ENCODE measurements at regions of chr11 and their contacts with region 1.

Region 1: DNA sequence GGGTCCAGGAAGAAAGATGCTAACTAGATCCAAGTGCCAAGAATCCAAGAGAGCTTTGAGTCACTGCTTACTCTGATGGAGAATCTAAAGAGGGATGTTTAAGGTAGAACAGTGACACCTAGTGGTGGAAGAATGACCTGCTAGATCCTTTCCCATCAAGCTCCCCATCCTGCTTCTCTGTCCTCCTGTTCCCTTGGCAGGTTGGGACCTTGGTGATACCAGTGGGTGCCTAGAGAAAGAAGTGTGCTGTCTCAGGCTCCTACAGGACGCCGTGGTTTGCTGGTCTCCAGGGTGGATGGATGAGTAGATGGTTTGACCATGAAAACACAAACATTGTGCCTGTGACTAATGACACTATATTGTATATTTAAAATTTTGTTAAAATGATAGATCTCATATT is 383.7 kb downstream of the TMEM135 start:
- DNase-seq: peak; percentile 32
- ATAC-seq: peak; percentile 94
- H3K4me3 Mint-ChIP-seq: no peak overlapping the region
- H3K27ac Mint-ChIP-seq: no peak overlapping the region
- H3K4me1 Mint-ChIP-seq: peaks cover 11% of the 10 kb centered on the region
- H3K27me3 Mint-ChIP-seq: no peaks in the 10 kb centered on the region
- CTCF ChIP-seq: peak; percentile 59

Region 2: DNA sequence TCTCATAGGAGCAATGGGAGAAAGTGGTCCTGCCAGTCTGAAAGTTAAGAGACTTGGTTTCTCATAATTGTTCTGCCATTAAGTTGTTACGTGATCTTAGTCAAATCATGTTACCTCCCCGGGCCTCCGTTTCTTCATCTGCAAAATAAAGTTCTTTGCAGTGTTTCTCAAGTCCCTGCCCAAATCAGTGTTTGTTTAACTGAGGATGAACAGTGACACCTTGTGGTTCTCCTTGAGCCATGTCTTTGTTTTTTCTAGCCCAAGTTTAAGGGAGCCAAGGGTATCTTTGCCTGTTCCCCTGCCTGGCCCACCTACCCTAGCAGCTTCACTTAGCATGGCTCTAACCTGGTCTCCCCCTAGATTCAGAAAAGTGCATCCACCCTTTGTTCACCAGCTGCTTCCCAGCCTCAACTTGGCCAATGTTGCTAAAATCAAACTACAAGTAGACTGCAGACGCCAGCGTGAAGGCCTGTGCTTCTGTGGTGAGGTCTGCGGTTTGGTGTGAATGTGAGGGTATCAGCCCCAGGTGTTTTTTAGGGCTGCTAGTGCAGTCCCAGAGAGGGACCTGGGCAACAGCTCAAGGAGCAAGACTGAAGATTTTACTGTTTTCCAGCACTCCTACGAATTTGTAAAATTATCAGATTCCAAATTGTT is 501.7 kb before region 1 on chr11:
- CTCF ChIA-PET with region 1: interaction called, 11 read pairs
- POLR2A ChIA-PET with region 1: no interaction called
- DNase-seq: peak; percentile 15
- ATAC-seq: peak; percentile 66
- H3K4me3 Mint-ChIP-seq: no peak overlapping the region
- H3K27ac Mint-ChIP-seq: peak overlapping the region; percentile 29; the same call in 1 of the 2 replicates
- H3K4me1 Mint-ChIP-seq: peaks cover 29% of the 10 kb centered on the region
- H3K27me3 Mint-ChIP-seq: no peaks in the 10 kb centered on the region; the same call in 1 of the 2 replicates
- CTCF ChIP-seq: peak; percentile 52

Region 3: GRCh38 chr11:86938900-86939880 is 482.2 kb before region 1 on chr11:
- CTCF ChIA-PET with region 1: interaction called, 29 read pairs
- POLR2A ChIA-PET with region 1: no interaction called
- DNase-seq: no peak
- ATAC-seq: peak; percentile 49
- H3K4me3 Mint-ChIP-seq: no peak overlapping the region
- H3K27ac Mint-ChIP-seq: peak overlapping the region; percentile 86; the same call in 1 of the 2 replicates
- H3K4me1 Mint-ChIP-seq: peaks cover 40% of the 10 kb centered on the region
- H3K27me3 Mint-ChIP-seq: no peaks in the 10 kb centered on the region
- CTCF ChIP-seq: peak; percentile 55

Region 4: GRCh38 chr11:87352759-87353707 is 68.4 kb before region 1 on chr11:
- CTCF ChIA-PET with region 1: interaction called, 75 read pairs
- POLR2A ChIA-PET with region 1: interaction called, 3 read pairs
- DNase-seq: peak; percentile 92
- ATAC-seq: peak; percentile 97
- H3K4me3 Mint-ChIP-seq: no peak overlapping the region
- H3K27ac Mint-ChIP-seq: no peak overlapping the region
- H3K4me1 Mint-ChIP-seq: peaks cover 4% of the 10 kb centered on the region
- H3K27me3 Mint-ChIP-seq: no peaks in the 10 kb centered on the region
- CTCF ChIP-seq: peak; percentile 99

Region 5: GRCh38 chr11:87359401-87359800 is 62.0 kb before region 1 on chr11:
- CTCF ChIA-PET with region 1: interaction called, 75 read pairs
- POLR2A ChIA-PET with region 1: interaction called, 3 read pairs
- DNase-seq: no peak
- ATAC-seq: peak; percentile 34; the same call in 1 of the 2 replicates
- H3K4me3 Mint-ChIP-seq: no peak overlapping the region
- H3K27ac Mint-ChIP-seq: no peak overlapping the region
- H3K4me1 Mint-ChIP-seq: peaks cover 12% of the 10 kb centered on the region
- H3K27me3 Mint-ChIP-seq: no peaks in the 10 kb centered on the region
- CTCF ChIP-seq: no peak

Region 6: DNA sequence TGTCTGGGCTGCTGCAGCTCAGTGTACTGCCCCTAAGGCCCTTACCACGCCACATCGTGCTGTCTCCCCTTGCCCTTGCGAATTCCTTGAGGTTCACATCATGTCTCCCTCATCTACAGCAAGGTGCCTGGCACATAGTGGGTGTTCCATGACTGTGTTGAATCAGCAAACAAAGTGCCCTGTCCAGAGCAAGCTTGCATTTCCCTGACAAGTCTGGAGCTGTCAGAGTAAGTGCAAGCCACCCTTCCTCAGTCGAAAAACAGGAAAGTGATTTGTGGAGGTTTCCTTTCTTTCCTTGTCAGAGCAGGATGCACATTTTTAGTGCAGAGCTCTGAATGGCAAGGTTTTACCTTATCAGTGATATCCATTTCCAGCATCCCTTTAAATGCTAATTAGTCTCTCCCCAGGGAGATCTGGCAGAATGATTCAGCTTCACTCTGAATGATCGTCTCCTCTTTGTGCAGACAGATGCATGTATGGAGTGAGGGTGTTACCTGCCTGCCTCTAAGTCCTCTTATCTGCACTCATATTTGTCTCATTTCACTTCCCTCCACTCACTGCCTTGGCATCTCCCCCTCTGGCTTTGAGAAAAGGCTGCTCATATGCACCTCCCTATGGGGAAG is 52.5 kb before region 1 on chr11:
- CTCF ChIA-PET with region 1: interaction called, 27 read pairs
- POLR2A ChIA-PET with region 1: no interaction called
- DNase-seq: no peak
- ATAC-seq: peak; percentile 65
- H3K4me3 Mint-ChIP-seq: no peak overlapping the region
- H3K27ac Mint-ChIP-seq: peak overlapping the region; percentile 32; the same call in 1 of the 2 replicates
- H3K4me1 Mint-ChIP-seq: peaks cover 36% of the 10 kb centered on the region
- H3K27me3 Mint-ChIP-seq: no peaks in the 10 kb centered on the region
- CTCF ChIP-seq: no peak

Region 7: GRCh38 chr11:87473174-87473573 is 51.8 kb after region 1 on chr11:
- CTCF ChIA-PET with region 1: interaction called, 10 read pairs
- POLR2A ChIA-PET with region 1: no interaction called
- DNase-seq: no peak
- ATAC-seq: no peak
- H3K4me3 Mint-ChIP-seq: no peak overlapping the region
- H3K27ac Mint-ChIP-seq: no peak overlapping the region
- H3K4me1 Mint-ChIP-seq: peaks cover 3% of the 10 kb centered on the region; the same call in 1 of the 2 replicates
- H3K27me3 Mint-ChIP-seq: no peaks in the 10 kb centered on the region
- CTCF ChIP-seq: no peak

Region 8: DNA sequence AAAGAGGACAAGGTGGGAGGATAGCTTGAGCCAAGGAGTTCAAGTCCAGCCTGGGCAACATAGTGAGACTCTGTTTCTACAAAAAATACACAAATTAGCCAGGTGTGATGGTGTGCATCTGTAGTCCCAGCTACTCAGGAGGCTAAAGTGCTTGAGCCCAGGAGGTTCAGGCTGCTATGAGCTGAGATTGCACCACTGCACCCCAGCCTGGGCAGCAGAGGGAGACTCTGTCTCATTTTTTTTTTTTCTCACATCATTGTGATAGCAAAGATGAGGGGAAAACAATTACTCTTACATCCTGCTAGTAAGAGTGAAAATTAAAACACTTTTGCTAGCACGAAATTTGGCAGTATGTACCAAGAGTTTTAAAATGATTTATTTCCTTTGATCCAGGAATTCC is 80.0 kb after region 1 on chr11:
- CTCF ChIA-PET with region 1: no interaction called
- POLR2A ChIA-PET with region 1: no interaction called
- DNase-seq: no peak
- ATAC-seq: peak; percentile 38
- H3K4me3 Mint-ChIP-seq: no peak overlapping the region
- H3K27ac Mint-ChIP-seq: no peak overlapping the region
- H3K4me1 Mint-ChIP-seq: peaks cover 6% of the 10 kb centered on the region
- H3K27me3 Mint-ChIP-seq: no peaks in the 10 kb centered on the region; the same call in none of the 2 replicates
- CTCF ChIP-seq: no peak

Region 9: DNA sequence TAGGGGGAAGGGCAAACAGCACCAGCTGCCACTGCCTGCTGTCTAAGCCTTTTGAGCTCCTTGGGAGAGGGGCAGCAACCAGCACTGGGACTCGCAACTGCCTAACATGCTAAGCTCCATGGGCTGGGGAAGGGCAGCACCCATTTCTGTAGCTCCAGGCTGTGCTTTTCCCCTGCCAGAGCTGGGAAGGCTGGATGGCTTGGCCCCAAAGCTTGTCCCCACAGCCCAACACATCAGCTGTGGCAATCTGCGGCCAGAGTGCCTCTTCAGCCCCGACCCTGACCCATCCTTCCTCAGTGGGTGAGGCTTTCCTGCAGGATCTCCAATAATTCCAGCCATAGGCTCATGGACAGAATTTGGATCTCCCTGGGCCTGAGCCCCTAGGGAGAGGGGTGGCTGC is 167.7 kb after region 1 on chr11:
- CTCF ChIA-PET with region 1: no interaction called
- POLR2A ChIA-PET with region 1: no interaction called
- DNase-seq: no peak
- ATAC-seq: no peak
- H3K4me3 Mint-ChIP-seq: no peak overlapping the region
- H3K27ac Mint-ChIP-seq: no peak overlapping the region
- H3K4me1 Mint-ChIP-seq: 0 out of 2 replicates have a peak, but pooled peaks cover 4% of the 10 kb centered on the region
- H3K27me3 Mint-ChIP-seq: peaks cover 3% of the 10 kb centered on the region; the same call in 1 of the 2 replicates
- CTCF ChIP-seq: no peak

Region 10: DNA sequence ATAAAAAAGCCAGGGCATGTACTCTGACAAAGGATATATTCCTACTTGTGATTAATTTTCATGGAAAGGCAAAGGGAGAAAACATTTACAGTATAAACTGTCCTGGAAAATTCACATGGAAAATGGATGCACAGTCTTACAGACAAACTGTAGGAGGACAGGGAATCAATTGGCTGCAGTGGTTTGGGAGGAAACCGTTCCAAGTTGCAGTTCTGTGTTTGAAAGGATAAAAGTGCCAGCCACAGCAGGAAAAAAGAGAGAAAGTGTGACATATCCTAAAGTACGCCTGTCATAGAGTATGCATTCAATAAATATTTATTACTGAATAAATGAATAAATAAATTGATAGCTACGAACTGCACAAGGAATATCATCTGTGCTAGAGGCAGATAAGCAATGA is 291.0 kb after region 1 on chr11:
- CTCF ChIA-PET with region 1: no interaction called
- POLR2A ChIA-PET with region 1: no interaction called
- DNase-seq: no peak
- ATAC-seq: no peak
- H3K4me3 Mint-ChIP-seq: no peak overlapping the region
- H3K27ac Mint-ChIP-seq: no peak overlapping the region; the same call in 1 of the 2 replicates
- H3K4me1 Mint-ChIP-seq: peaks cover 43% of the 10 kb centered on the region
- H3K27me3 Mint-ChIP-seq: no peaks in the 10 kb centered on the region
- CTCF ChIP-seq: no peak

Measured in WTC11 (cell line).